Activated naive CD4-positive, alpha-beta T cell treated with anti-CD3 and anti-CD28 coated beads, Interleukin-2, amount 10 ng/mL, durations not matched to agents 7 days and 5 days (primary cell): ENCODE measurements at regions of chr1 and their contacts with region 1.

Region 1: DNA sequence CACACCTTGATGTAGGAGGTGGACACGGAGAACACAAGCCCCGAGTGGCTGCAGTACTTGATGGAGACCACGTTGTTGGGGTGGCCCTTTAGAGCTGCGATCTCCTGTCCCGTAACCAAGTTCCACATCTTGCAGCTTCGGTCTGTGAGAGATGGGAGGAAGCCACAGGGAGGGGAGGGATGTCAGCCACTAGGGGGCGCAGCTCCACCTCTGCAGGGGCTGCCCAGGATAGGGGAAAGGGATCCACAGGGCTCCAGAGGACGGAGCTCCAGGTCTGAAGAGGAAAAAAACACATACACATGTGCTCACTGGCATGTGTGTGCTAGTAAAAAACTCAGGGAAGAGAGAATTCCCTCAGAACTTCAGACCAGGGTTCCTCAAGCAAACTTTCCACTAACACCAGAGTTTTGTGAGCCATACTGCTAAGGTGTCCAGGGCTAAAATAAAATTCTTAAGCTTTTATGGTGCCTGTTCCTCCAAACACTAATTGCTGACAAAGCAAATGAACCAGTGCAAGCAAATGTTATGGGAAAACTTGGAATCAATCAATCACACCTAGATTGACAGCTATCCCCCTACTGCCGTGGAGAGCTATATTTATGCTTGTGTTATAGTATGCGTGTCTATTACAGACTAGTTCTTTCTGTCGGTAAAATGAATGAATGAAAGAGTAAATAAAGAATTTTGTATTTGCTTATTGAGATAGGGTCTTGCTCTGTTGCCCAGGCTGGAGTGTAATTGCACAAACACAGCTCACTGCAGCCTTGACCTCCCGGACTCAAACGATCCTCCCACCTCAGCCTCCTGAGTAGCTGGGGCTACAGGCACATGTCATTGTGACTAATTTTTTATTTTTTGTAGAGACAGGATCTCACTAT is 43.7 kb downstream of the KIF21B start:
- DNase-seq: peak; percentile 78
- H3K4me3 Mint-ChIP-seq: no peak overlapping the region
- H3K27ac Mint-ChIP-seq: no peak overlapping the region
- H3K4me1 Mint-ChIP-seq: no peaks in the 10 kb centered on the region
- H3K27me3 Mint-ChIP-seq: no peaks in the 10 kb centered on the region

Region 2: DNA sequence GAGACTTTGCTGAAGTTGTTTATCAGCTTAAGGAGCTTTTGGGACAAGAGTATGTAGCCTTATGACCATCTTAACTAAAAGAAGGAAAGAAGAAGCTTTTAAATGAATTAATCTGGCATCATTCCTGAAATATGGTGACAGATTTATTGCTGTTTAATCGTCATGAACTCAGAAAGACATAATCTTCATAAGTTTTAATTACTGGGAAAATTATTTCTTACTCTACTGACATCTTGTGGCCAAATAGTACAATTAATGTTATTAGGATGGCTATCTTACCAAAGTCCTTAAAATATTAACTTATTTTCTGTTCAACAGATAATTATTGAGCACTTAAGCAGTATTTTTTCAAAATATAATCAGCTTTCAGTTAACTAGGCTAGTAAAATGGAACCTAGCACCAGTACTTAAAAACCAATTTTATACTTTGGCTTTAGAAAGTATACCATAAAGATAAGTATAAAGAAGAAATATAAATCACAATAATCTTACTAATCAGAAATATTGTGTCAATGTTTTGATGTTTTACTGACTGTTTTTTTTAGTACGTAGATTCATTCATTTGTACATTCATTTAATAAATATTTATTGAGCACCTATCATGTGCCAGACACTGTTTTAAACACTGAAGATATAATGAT is 141.8 kb before region 1 on chr1:
- CTCF ChIA-PET with region 1: no interaction called
- DNase-seq: no peak
- H3K4me3 Mint-ChIP-seq: no peak overlapping the region
- H3K27ac Mint-ChIP-seq: no peak overlapping the region
- H3K4me1 Mint-ChIP-seq: no peaks in the 10 kb centered on the region
- H3K27me3 Mint-ChIP-seq: no peaks in the 10 kb centered on the region

Region 3: DNA sequence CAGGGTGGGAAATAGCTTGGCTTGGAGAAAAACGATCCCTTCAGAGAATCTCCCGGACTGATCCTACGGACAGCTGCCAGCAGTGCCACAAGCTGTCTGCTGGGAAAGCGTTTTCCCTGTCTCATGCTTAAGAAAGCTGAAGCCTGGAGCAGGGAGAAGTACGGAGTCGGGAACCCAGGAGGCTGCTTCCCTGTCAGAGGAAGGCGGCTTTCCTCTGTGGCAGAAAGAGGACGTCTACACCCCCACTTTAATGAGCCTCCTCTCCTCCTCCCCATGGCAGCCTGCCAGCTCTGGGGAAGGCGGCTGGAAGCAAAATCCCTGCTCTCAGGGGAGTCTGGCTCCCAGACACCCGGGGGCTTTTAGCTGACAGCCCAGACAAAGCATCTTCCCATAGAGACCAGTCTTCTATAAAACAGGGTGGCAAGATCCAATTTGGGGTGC is 36.4 kb after region 1 on chr1:
- CTCF ChIA-PET with region 1: interaction called, 30 read pairs
- DNase-seq: no peak
- H3K4me3 Mint-ChIP-seq: peak overlapping the region; percentile 59
- H3K27ac Mint-ChIP-seq: peak overlapping the region; percentile 100
- H3K4me1 Mint-ChIP-seq: peaks cover 97% of the 10 kb centered on the region
- H3K27me3 Mint-ChIP-seq: no peaks in the 10 kb centered on the region

Region 4: DNA sequence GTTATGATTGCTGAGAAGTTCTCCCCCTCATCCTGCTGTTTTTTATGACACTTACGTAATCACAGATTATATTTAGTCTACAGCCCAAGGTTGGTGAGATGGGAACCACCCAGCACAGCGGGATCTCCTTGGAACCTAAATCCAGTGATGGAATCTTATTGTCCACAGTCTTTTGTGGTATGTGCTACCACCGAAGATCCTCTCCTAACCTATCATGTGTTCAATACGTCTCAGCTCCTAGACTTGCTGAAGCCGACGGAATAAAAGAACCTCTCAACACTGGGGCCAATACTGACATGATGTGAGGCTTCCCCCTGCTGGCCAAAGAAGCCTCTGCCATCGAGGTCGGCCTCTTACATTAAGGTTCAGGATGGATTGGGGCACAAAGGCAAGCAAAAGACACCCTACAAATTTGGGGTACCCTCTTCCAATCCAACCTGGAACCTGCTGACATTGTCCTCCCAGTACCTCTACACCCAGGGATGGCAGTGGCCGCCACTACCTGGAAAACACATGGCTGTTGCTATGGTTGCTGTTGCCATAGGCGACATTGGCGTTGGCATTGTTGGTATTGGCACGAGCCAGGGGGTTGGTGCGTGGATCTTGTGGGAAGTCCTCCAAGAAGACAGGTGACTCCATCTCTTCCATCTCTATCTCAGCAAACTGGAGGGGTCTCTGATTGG is 63.1 kb after region 1 on chr1:
- CTCF ChIA-PET with region 1: interaction called, 120 read pairs
- DNase-seq: peak; percentile 83
- H3K4me3 Mint-ChIP-seq: no peak overlapping the region
- H3K27ac Mint-ChIP-seq: no peak overlapping the region
- H3K4me1 Mint-ChIP-seq: peaks cover 2% of the 10 kb centered on the region
- H3K27me3 Mint-ChIP-seq: peaks cover 44% of the 10 kb centered on the region

Region 5: DNA sequence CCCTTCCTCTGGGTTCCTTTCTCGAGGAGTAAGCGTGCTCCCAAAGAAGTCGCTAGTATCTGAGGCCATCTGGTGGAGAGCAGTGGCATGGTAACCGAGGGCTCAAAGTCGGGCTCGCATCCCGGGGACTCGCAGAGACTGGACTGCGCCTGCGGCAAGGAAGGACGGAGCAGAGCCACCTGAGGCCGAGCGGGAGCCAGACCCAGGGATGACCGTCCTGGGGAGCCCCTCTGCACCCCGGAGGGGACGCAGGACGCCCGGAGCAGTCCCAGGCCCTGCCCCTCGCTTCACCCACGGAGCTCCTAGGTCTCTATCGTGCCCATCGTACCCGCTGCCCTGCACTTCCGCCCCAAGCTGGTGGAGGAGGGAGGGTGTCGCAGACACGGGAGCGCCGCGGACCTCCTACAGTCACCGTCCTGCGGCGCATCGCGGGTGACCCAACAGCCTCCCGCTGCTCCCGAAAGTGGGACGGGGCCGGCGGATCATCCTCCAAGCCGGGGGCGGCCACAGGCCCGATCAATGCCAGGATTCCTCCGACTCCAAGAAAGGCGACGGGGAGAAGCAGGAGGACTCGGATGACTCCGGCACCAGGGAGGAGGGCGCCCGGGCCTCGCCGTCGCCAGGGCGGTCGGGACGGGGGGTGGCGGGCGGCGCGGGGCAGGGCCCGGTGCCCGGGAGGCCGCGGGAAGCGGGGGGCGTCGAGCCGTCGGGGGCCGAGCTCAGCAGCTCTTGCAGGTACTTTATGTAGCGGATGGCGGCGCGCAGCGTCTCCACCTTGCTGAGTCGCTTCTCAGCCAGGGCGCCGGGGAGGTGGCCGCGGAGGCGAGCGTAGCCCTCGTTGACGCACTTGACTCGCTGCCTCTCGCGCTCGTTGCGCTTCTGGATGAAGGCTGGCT is 134.7 kb after region 1 on chr1:
- CTCF ChIA-PET with region 1: interaction called, 17 read pairs
- DNase-seq: peak; percentile 81
- H3K4me3 Mint-ChIP-seq: peak overlapping the region; percentile 77
- H3K27ac Mint-ChIP-seq: no peak overlapping the region
- H3K4me1 Mint-ChIP-seq: peaks cover 7% of the 10 kb centered on the region
- H3K27me3 Mint-ChIP-seq: peaks cover 72% of the 10 kb centered on the region

Region 6: GRCh38 chr1:201214461-201214860 is 234.6 kb after region 1 on chr1:
- CTCF ChIA-PET with region 1: no interaction called
- DNase-seq: peak; percentile 20
- H3K4me3 Mint-ChIP-seq: no peak overlapping the region
- H3K27ac Mint-ChIP-seq: no peak overlapping the region
- H3K4me1 Mint-ChIP-seq: no peaks in the 10 kb centered on the region
- H3K27me3 Mint-ChIP-seq: peaks cover 22% of the 10 kb centered on the region

Region 7: DNA sequence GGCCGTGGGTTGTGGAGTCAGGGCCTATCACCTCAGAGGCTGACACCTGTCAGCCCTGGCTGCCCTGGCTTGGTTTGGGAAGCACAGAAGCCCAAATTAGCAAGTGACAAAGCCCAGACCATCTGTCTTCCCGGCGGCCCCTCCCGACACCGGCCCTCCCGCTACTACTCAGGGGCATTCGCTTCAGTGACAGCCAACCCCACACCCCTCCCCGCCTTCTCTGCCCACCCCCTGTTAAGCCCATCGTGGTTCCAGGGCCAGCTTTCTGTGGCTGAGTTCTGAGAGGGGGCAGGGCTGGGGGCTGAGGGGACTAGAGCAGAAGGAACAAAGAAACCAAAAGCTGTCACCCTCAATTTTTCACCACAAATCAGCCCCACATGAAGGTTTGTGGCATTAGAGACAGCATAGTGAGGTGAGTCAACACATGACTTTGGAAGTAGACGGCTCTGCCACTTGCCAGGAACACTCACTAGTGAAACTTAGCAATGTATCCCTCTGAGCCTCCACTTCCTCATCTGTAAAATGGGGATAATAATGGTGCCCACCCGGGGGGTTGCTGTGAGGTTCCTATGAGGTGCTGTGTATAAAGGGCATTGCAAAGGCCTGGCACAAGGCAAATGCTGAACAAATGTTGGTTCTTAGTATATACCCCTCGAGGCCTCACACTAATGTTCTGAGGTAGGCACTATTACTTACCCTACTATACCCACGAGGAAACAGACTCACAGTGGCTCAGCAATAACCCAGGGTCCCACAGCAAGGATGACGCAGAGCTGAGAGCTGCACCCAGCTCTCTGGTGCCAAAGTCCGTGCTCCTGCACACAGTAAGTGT is 446.9 kb after region 1 on chr1:
- CTCF ChIA-PET with region 1: no interaction called
- DNase-seq: peak; percentile 32
- H3K4me3 Mint-ChIP-seq: no peak overlapping the region
- H3K27ac Mint-ChIP-seq: no peak overlapping the region
- H3K4me1 Mint-ChIP-seq: peaks cover 3% of the 10 kb centered on the region
- H3K27me3 Mint-ChIP-seq: peaks cover 46% of the 10 kb centered on the region